Activated naive CD4-positive, alpha-beta T cell treated with anti-CD3 and anti-CD28 coated beads, Interleukin-2, amount 10 ng/mL, durations not matched to agents 7 days and 5 days (primary cell): ENCODE measurements at regions of chr6 and their contacts with region 1.

Region 1: DNA sequence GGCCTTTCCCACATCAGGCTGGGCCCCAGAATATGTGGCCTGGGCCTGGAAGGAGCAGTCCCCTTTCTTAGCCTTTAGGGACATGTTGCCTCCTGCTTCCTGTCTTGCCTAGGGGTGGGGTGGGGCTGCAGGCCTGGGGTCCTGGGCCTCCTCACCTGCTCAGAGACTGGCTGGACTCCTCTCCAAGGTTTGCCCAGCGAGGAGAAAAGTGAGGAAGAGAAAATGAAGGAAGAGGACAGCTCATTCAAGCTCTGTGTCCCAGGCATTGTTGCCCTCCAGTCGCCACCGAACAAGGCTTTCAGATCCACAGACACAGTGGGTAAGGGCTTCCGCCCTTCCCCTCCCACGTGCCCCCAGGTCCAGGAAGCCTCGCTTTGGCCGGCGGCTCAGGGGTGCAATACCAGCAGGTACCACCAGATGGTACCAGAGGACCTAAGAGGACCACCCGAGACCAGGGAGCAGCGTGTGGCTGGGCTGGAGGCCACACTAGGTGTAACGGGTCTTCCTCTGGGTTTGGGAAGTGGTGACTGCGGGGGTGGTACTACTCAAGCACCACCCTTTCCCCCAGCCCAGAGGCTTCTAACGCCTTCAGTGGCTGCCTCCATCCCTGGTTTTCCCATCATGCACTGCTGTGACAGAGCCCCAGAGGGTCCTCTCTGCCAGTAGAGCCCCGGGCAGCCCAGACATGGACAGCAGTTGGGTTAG is 5.5 kb upstream of the BAK1 start:
- DNase-seq: peak; percentile 93
- H3K4me3 Mint-ChIP-seq: peak overlapping the region; percentile 76
- H3K27ac Mint-ChIP-seq: peak overlapping the region; percentile 91
- H3K4me1 Mint-ChIP-seq: peaks cover 33% of the 10 kb centered on the region
- H3K27me3 Mint-ChIP-seq: no peaks in the 10 kb centered on the region

Region 2: DNA sequence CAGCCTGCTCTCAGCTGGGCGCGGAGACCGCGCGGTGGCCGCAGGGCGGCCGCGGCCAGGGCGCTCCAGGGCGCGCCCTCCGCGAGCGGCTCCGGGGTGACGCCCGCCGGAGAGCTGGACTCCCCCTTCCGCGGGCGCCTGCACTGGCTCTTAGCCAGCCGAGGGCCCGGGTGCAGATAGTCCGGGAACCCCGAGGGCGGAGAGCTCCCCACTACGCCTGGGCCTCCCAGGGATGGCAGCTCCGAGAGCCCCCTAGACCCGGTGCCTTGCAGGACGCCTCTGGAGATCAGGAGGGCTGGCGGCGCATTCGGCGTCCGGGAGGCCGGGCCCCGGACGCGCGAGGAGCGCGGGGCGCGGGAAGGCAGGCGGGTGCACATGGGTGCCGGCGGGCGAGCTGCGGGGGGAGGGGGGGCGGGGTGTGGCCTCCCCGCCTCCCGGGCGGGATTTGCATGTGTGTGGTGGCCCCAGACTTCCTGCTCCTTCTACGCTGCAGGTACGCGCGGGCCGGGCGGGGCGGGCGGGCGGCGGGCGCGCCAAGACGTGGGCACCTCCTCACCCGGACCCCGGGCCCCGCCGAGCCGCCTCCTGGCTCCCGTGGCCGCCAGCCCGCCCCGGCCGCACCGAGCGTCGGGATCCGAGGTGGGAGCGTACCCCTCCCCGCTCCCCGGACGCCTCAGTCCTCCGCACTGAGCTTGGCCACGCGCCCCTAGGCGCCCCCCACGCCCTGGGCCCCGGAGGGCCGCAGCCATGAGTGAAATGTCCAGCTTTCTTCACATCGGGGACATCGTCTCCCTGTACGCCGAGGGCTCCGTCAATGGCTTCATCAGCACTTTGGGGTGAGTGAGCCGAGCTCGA is 35.5 kb after region 1 on chr6 and contains the start of gene ITPR3:
- CTCF ChIA-PET with region 1: interaction called, 11 read pairs
- DNase-seq: peak; percentile 86
- H3K4me3 Mint-ChIP-seq: peak within 1 kb of the TSS; percentile 93
- H3K27ac Mint-ChIP-seq: peak within 1 kb of the TSS; percentile 95
- H3K4me1 Mint-ChIP-seq: peaks cover 66% of the 10 kb centered on the region
- H3K27me3 Mint-ChIP-seq: no peaks in the 10 kb centered on the region

Region 3: DNA sequence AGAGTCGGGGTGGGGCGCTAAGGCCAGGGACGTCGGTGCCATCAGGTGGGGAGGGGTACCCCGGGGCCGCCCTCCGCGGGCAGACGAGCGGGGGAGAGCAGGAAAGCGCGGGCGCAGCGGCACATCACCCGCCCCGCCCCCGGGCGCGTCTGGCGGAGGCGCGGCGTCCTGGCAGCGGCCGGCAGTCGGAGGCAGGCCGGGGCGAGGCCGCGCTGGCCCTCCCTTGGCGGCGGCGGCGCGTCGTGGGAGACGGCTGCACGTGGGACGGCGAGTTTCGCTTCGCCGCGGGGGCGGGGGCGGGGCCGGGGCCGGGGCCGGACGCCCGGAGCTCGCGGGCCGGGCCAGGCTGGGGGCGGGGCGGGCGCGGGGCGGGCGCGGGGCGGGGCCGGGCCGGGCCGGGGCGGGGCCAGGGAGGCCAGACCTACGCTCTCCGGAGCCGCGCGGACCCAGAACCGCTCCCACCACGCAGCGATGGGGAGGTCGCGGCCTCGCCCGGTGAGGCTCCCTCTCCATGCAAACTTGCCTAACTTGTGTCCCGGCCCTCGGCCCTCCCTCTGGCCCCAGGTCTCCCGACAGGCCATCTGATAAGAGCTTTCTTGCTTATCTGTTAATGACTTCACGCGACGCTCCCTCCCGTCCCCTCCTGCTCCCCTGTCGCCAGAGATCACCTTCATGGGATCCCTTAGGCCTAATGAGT is 48.1 kb after region 1 on chr6:
- CTCF ChIA-PET with region 1: interaction called, 10 read pairs
- DNase-seq: peak; percentile 77
- H3K4me3 Mint-ChIP-seq: peak overlapping the region; percentile 69
- H3K27ac Mint-ChIP-seq: no peak overlapping the region
- H3K4me1 Mint-ChIP-seq: peaks cover 81% of the 10 kb centered on the region
- H3K27me3 Mint-ChIP-seq: no peaks in the 10 kb centered on the region

Region 4: GRCh38 chr6:33700391-33701050 is 115.0 kb after region 1 on chr6:
- CTCF ChIA-PET with region 1: interaction called, 44 read pairs
- DNase-seq: peak; percentile 87
- H3K4me3 Mint-ChIP-seq: no peak overlapping the region
- H3K27ac Mint-ChIP-seq: peak overlapping the region; percentile 35
- H3K4me1 Mint-ChIP-seq: peaks cover 45% of the 10 kb centered on the region
- H3K27me3 Mint-ChIP-seq: no peaks in the 10 kb centered on the region